Activated CD4-positive, alpha-beta memory T cell treated with anti-CD3 and anti-CD28 coated beads for 36 hours (primary cell): ENCODE measurements at regions of chr2 and their contacts with region 1.

Region 1: GRCh38 chr2:69914170-69914960 is 544 bp upstream of the MXD1 start:
- DNase-seq: peak; percentile 100
- H3K4me3 Mint-ChIP-seq: peak overlapping the region; percentile 82
- H3K27ac Mint-ChIP-seq: peak overlapping the region; percentile 89
- H3K4me1 Mint-ChIP-seq: peaks cover 40% of the 10 kb centered on the region
- H3K27me3 Mint-ChIP-seq: no peaks in the 10 kb centered on the region

Region 2: DNA sequence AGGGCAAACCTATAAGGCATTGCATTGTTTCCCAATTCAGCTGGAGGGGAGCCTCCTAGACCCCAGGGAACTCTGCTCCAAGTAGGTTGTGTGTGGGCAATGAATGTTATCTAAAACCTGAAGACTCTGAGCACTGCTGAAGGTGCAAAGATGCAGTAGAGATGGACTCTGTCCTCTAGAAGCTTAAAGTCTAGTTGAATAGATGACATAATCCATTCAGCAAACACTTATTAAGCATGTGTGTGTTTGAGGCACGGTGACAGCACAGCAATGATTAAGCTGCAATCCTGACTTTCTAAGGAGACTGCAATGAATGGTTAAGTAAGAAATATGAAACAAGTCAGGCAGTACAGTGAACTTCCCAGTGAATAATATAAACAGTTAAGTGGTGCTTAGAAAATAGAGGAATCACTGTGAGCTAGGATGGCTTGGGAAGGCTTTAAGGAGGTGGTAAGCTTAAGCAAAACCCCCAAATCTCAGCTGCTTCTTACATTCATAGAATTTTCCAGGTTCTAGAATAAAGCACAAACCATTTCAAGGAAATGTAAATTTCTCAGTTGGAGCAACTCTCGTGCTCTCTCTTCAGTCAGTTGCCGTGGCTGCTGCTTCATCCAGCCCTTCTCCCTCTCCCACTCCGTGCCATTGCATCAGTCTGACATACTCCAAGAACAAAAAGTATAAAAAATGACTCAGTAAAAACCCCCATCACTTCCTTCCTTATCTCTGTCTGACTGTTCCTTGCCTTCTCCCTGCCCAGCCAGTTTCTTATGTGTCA is 19.7 kb after region 1 on chr2:
- CTCF ChIA-PET with region 1: interaction called, 20 read pairs
- POLR2A ChIA-PET with region 1: interaction called, 16 read pairs
- intact Hi-C with region 1: loop called (anchors 2 kb)
- DNase-seq: peak; percentile 63
- H3K4me3 Mint-ChIP-seq: no peak overlapping the region
- H3K27ac Mint-ChIP-seq: peak overlapping the region; percentile 73
- H3K4me1 Mint-ChIP-seq: peaks cover 37% of the 10 kb centered on the region
- H3K27me3 Mint-ChIP-seq: no peaks in the 10 kb centered on the region

Region 3: DNA sequence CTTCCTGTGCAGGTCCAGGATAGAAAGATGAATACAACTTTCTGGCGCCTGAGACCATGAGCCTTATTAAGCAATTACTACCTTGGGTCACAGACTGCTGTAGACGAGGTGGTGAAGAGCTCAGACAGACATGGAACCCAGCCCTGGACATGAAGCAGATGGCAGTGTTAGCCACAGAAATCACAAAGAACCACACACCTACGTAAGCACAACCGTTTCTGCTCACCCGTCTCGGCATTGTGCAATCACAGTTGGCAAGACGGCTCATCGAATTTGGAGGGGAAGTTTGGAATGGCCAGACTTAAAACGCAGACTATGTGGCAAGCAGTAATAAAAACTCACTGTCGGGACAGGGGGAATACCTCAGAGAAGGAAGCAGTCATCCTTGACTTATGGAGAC is 71.3 kb after region 1 on chr2:
- CTCF ChIA-PET with region 1: no interaction called
- POLR2A ChIA-PET with region 1: no interaction called
- intact Hi-C with region 1: no loop called
- DNase-seq: no peak
- H3K4me3 Mint-ChIP-seq: no peak overlapping the region
- H3K27ac Mint-ChIP-seq: no peak overlapping the region
- H3K4me1 Mint-ChIP-seq: peaks cover 3% of the 10 kb centered on the region
- H3K27me3 Mint-ChIP-seq: no peaks in the 10 kb centered on the region

Region 4: GRCh38 chr2:70086838-70087701 is 172.7 kb after region 1 on chr2 and contains the start of gene PCBP1:
- CTCF ChIA-PET with region 1: interaction called, 34 read pairs
- POLR2A ChIA-PET with region 1: interaction called, 64 read pairs
- intact Hi-C with region 1: loop called (anchors 1 kb)
- DNase-seq: peak; percentile 96
- H3K4me3 Mint-ChIP-seq: peak within 1 kb of the TSS; percentile 97
- H3K27ac Mint-ChIP-seq: peak within 1 kb of the TSS; percentile 100
- H3K4me1 Mint-ChIP-seq: peaks cover 49% of the 10 kb centered on the region
- H3K27me3 Mint-ChIP-seq: peaks cover 3% of the 10 kb centered on the region
- total RNA-seq, gene PCBP1: 444 to 449 TPM

Region 5: GRCh38 chr2:70132244-70133126 is 218.1 kb after region 1 on chr2:
- CTCF ChIA-PET with region 1: interaction called, 32 read pairs
- POLR2A ChIA-PET with region 1: interaction called, 35 read pairs
- intact Hi-C with region 1: no loop called
- DNase-seq: peak; percentile 53
- H3K4me3 Mint-ChIP-seq: peak overlapping the region; percentile 94
- H3K27ac Mint-ChIP-seq: peak overlapping the region; percentile 100
- H3K4me1 Mint-ChIP-seq: peaks cover 75% of the 10 kb centered on the region
- H3K27me3 Mint-ChIP-seq: no peaks in the 10 kb centered on the region

Region 6: DNA sequence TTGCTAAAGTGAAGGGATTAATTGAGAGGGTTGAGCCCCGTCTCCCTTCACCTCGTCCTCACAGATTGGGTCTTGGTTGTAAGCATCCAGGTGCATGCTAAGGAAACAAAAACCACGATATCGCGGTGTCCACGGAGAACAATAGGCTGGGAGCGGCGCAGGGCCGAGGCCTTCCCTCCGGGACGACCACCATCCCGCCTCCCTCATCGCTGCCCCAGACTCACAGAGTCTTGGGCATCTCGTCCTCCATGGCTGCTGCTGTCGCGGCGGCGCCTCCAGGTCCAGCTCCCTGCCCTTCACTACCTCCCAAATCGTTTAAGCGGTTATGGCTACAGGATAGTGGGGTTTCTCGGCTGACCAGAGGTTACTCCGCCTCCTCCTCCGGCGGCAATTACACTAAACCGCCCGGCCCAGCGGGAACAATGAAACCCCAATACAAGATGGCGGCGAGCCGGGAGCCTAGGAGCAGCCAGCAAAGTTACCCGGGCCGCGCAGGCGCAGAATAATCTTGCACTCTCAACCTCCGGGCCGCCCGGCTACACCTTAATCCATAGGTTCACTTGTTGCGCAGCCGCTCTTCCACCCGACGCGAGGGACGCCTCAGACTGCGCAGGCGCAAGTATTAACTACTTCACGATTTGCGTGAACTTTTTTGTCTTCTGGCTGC is 333.9 kb after region 1 on chr2 and contains the start of gene TIA1:
- CTCF ChIA-PET with region 1: interaction called, 3 read pairs
- POLR2A ChIA-PET with region 1: interaction called, 4 read pairs
- intact Hi-C with region 1: loop called (anchors 2 kb)
- DNase-seq: peak; percentile 99
- H3K4me3 Mint-ChIP-seq: peak within 1 kb of the TSS; percentile 90
- H3K27ac Mint-ChIP-seq: peak within 1 kb of the TSS; percentile 96
- H3K4me1 Mint-ChIP-seq: peaks cover 28% of the 10 kb centered on the region
- H3K27me3 Mint-ChIP-seq: peaks cover 4% of the 10 kb centered on the region
- total RNA-seq, gene TIA1: 82.5 to 98.6 TPM